Esophagus muscularis mucosa (tissue), 4 donors: ENCODE measurements at regions of chr21 and their contacts with region 1.

Region 1: DNA sequence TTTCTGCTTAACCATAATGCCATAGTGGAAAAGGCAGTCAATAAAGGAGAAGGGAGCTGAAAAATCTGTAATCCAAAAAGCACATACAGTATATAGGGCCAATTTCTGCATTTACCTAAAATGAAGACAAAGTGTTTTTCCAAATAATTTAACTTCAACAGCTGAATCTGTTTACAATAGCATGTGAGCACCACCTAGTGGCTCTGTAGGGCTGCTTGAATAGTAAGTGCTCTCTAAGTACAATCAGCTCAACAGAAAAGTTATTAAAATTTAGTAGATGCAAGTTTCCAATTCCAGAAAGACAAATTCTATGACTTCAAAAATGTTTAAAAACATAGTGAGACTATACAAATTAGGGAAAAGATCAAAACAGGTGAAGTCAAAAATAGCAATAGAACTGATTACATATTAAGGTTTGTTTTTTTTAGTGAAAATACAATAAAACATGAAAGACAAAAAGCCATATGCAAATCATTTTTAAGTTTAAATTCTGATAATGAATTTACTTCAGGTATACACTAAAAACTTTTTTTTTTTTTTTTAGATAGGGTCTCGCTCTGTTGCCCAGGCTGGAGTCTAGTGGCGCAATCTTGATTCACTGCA is 220.0 kb downstream of the SETD4 start:
- DNase-seq: no peak
- H3K4me3 ChIP-seq: no peak overlapping the region
- H3K27ac ChIP-seq: no peak overlapping the region
- H3K4me1 ChIP-seq: peaks cover 0 to 3% (median 0%) of the 10 kb centered on the region in 4 donors
- H3K27me3 ChIP-seq: no peaks in the 10 kb centered on the region
- CTCF ChIP-seq: peak; percentile 56 to 76 (median 66)
- EP300 ChIP-seq: no peak
- POLR2A ChIP-seq: no peak

Region 2: GRCh38 chr21:36028127-36029069 is 188.1 kb after region 1 on chr21:
- intact Hi-C with region 1: loop called (anchors 10 kb)
- DNase-seq: peak; percentile 94
- H3K4me3 ChIP-seq: no peak overlapping the region
- H3K27ac ChIP-seq: no peak overlapping the region
- H3K4me1 ChIP-seq: peaks cover 0 to 12% (median 8%) of the 10 kb centered on the region in 4 donors
- H3K27me3 ChIP-seq: no peaks in the 10 kb centered on the region
- CTCF ChIP-seq: peak; percentile 91 to 93 (median 93)
- EP300 ChIP-seq: no peak
- POLR2A ChIP-seq: no peak